ENCODE measurements at regions of chr11 and their contacts with region 1.

Region 1: DNA sequence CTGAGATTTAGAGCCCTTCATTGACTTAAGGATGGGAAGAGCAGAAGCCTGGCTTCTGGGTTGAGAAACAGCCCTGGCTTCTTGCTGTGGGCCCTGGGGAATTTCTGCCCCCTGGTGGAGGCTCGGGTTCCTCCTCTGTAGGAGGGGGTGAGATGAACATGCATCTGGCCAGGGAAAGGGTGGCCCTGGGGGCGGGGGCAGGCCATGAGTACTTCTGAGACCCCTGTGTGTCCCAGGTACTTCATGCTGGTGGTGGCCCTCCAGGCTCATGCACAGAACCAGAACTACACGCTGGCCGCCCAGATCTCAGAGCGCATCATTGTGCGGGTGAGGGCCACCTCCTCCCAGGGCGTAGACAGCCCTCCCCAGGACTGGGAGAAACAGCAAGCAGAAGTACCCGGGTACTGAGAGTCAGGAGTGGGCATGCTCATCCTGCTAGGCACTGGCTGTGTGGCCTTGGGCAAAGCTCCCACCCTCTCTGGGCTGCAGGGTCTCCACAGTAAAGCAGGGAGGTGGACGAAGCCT is 15.8 kb downstream of the TMEM258 start:
- DNase-seq: peak; percentile 71 to 85 (median 76)
- H3K4me3 ChIP-seq: no peak overlapping the region
- H3K27ac ChIP-seq: peak overlapping the region; percentile 9 to 64
- H3K4me1 ChIP-seq: peaks cover 7% of the 10 kb centered on the region
- H3K27me3 ChIP-seq: no peaks in the 10 kb centered on the region
- CTCF ChIP-seq: peak; percentile 57 to 65 (median 62)
- EP300 ChIP-seq: no peak
- POLR2A ChIP-seq: no peak

Region 2: DNA sequence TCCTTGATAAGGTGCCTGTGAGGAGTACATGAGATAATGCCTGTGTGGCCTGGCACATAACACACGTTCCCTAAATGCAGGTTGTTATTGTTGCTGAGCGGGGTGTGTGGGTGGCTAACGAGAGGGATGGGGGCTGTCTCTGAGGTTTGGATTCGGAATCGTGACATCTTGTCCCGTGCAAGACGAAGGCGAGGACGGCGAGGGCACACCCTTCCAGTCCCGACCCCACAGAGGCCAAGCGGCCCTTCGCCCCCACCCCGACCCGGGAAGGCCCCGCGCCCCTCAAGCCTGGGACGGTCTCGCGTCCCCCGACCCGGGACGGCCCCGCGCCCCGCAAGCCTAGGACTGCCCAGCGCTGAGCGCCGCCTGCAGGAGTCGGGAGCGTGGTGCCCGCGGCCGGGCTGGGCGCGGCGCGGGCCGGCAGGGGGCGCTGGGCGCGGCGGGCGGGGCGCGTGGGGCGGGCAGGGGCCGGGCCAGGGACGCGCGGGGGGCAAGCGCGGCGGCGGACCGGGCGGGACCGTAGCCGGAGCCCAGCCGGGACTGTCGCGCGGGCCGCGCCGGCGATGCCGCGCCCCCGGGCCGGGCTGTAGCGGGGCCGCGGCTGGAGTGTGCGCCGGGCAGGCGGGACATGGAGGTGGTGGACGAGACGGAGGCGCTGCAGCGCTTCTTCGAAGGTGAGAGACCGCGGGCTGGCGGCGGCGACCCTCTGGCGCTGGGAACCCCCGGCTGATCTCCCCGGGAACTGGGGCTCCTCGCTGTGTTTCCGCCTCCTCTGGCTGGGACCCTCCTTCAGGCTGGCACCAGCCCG is 24.3 kb before region 1 on chr11 and contains the start of gene MYRF:
- intact Hi-C with region 1: loop called in 1 of 4 experiments (anchors 2 kb)
- DNase-seq: peak; percentile 59 to 84 (median 62)
- H3K4me3 ChIP-seq: peak within 1 kb of the TSS; percentile 75
- H3K27ac ChIP-seq: peak within 1 kb of the TSS; percentile 19 to 73
- H3K4me1 ChIP-seq: peaks cover 12% of the 10 kb centered on the region
- H3K27me3 ChIP-seq: no peaks in the 10 kb centered on the region
- CTCF ChIP-seq: peak; percentile 9 to 77 (median 72)
- EP300 ChIP-seq: no peak
- POLR2A ChIP-seq: no peak
- total RNA-seq, gene MYRF: 11.3 to 109 (median 41.3) TPM

Region 3: GRCh38 chr11:61792310-61793085 is 15.9 kb after region 1 on chr11 and contains the starts of genes FEN1 and TMEM258:
- intact Hi-C with region 1: no loop called
- DNase-seq: peak; percentile 85 to 91 (median 87)
- H3K4me3 ChIP-seq: peak within 1 kb of the TSS; percentile 65
- H3K27ac ChIP-seq: peak within 1 kb of the TSS; percentile 85 to 90
- H3K4me1 ChIP-seq: peaks cover 5% of the 10 kb centered on the region
- H3K27me3 ChIP-seq: no peaks in the 10 kb centered on the region
- CTCF ChIP-seq: peak in 2 of 3 donors; percentile 31 to 56
- EP300 ChIP-seq: no peak
- POLR2A ChIP-seq: peak; percentile 85
- total RNA-seq, gene FEN1: 3.7 to 8.6 (median 5.2) TPM
- total RNA-seq, gene TMEM258: 32.2 to 131 (median 117) TPM

Measured in ovary (tissue), 10 donors.